Right ventricle myocardium inferior (tissue), 1 donor: ENCODE measurements at regions of chr3 and their contacts with region 1.

Region 1: GRCh38 chr3:179015551-179016020 is 56.0 kb downstream of the ZMAT3 start:
- DNase-seq: no peak
- ATAC-seq: no peak

Region 2: GRCh38 chr3:178777718-178778411 is 237.7 kb before region 1 on chr3:
- intact Hi-C with region 1: no loop called
- DNase-seq: no peak
- ATAC-seq: no peak

Region 3: GRCh38 chr3:179071550-179072397 is 56.2 kb after region 1 on chr3 and contains the start of gene ZMAT3:
- intact Hi-C with region 1: loop called (anchors 5 kb)
- DNase-seq: peak; percentile 94
- ATAC-seq: peak; percentile 99
- total RNA-seq, gene ZMAT3: 11.1 TPM

Region 4: GRCh38 chr3:179100652-179101051 is 85.1 kb after region 1 on chr3:
- intact Hi-C with region 1: loop called (anchors 10 kb)
- DNase-seq: no peak
- ATAC-seq: no peak